ENCODE measurements at regions of chr5 and their contacts with region 1.

Region 1: GRCh38 chr5:140145818-140146522 is 20.2 kb downstream of the IGIP start:
- DNase-seq: peak; percentile 75 to 86 (median 81)
- H3K4me3 ChIP-seq: peak overlapping the region in 1 of 4 donors; percentile 60
- H3K27ac ChIP-seq: no peak overlapping the region
- H3K4me1 ChIP-seq: peaks cover 15 to 16% of the 10 kb centered on the region in 2 donors
- H3K27me3 ChIP-seq: no peaks in the 10 kb centered on the region
- CTCF ChIP-seq: peak; percentile 26 to 87 (median 58)
- POLR2A ChIP-seq: no peak

Region 2: DNA sequence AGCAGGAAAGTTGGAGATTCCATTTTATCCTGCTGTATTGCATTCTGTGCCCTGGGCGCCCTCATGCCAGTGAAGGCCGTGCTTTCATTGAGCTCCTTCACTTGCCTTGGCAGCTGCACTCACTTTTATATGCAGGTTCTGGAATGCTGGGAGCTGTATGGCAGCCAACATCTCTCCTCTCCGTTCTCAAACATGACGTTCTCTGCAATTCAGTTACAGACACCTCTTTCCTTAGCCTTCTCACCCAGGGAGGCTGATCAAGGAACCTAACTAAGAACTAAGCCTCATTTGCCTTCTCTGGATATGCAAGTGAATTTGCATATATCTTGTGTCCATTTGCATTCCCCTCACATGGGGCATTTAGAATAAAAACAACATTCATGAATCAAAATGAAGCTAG is 61.4 kb before region 1 on chr5:
- intact Hi-C with region 1: loop called in 1 of 2 experiments (anchors 5 kb)
- DNase-seq: peak; percentile 20 to 63 (median 34)
- H3K4me3 ChIP-seq: no peak overlapping the region
- H3K27ac ChIP-seq: no peak overlapping the region
- H3K4me1 ChIP-seq: no peaks in the 10 kb centered on the region
- H3K27me3 ChIP-seq: no peaks in the 10 kb centered on the region
- CTCF ChIP-seq: no peak
- POLR2A ChIP-seq: no peak

Region 3: GRCh38 chr5:140113699-140114263 is 32.2 kb before region 1 on chr5 and contains the start of gene PURA:
- intact Hi-C with region 1: loop called in 1 of 2 experiments (anchors 5 kb)
- DNase-seq: peak; percentile 96 to 98 (median 97)
- H3K4me3 ChIP-seq: peak within 1 kb of the TSS; percentile 7 to 89 (median 63)
- H3K27ac ChIP-seq: peak within 1 kb of the TSS; percentile 71 to 99 (median 96)
- H3K4me1 ChIP-seq: peaks cover 27 to 84% of the 10 kb centered on the region in 2 donors
- H3K27me3 ChIP-seq: no peaks in the 10 kb centered on the region
- CTCF ChIP-seq: no peak
- POLR2A ChIP-seq: peak; percentile 86 to 92
- total RNA-seq, gene PURA: 17.5 to 37.0 (median 24.8) TPM

Region 4: GRCh38 chr5:140497897-140498296 is 351.9 kb after region 1 on chr5:
- intact Hi-C with region 1: no loop called
- DNase-seq: no peak
- H3K4me3 ChIP-seq: no peak overlapping the region
- H3K27ac ChIP-seq: peak overlapping the region in 1 of 5 donors; percentile 2
- H3K4me1 ChIP-seq: peaks cover 7 to 9% of the 10 kb centered on the region in 2 donors
- H3K27me3 ChIP-seq: no peaks in the 10 kb centered on the region
- CTCF ChIP-seq: no peak
- POLR2A ChIP-seq: no peak

Region 5: DNA sequence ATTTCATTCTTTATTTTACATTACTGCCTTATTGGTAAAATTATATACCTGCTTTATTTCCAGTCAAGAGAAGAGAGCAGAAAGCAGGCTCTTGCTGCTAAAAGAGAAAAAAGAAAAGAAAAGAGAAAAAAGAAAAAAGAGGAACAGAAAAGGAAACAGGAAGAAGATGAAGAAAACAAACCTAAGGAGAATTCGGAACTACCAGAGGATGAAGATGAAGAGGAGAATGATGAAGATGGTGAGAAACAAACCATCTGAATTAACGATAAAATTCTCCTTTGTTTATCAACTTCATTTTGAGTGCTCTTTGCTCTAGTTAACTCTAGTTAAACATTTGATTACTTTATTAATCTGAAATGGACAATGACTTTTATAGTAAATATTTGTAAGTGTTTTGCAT is 378.0 kb after region 1 on chr5:
- intact Hi-C with region 1: no loop called
- DNase-seq: no peak
- H3K4me3 ChIP-seq: no peak overlapping the region
- H3K27ac ChIP-seq: no peak overlapping the region
- H3K4me1 ChIP-seq: no peaks in the 10 kb centered on the region
- H3K27me3 ChIP-seq: no peaks in the 10 kb centered on the region
- CTCF ChIP-seq: no peak
- POLR2A ChIP-seq: no peak

Measured in adrenal gland (tissue), 19 donors.